T-cell (primary cell): ENCODE measurements at regions of chr15 and their contacts with region 1.

Region 1: GRCh38 chr15:73240866-73241499 is 127.8 kb downstream of the HCN4 start:
- DNase-seq: peak; percentile 20 to 80 (median 58)
- ATAC-seq: peak in 3 of 4 experiments; percentile 37 to 65 (median 61)
- H3K4me3 ChIP-seq: no peak overlapping the region
- H3K4me3 Mint-ChIP-seq: no peak overlapping the region
- H3K27ac ChIP-seq: no peak overlapping the region
- H3K27ac Mint-ChIP-seq: no peak overlapping the region
- H3K4me1 ChIP-seq: no peaks in the 10 kb centered on the region
- H3K4me1 Mint-ChIP-seq: no peaks in the 10 kb centered on the region
- H3K27me3 ChIP-seq: no peaks in the 10 kb centered on the region
- H3K27me3 Mint-ChIP-seq: peaks cover 0 to 3% of the 10 kb centered on the region in 2 donors

Region 2: DNA sequence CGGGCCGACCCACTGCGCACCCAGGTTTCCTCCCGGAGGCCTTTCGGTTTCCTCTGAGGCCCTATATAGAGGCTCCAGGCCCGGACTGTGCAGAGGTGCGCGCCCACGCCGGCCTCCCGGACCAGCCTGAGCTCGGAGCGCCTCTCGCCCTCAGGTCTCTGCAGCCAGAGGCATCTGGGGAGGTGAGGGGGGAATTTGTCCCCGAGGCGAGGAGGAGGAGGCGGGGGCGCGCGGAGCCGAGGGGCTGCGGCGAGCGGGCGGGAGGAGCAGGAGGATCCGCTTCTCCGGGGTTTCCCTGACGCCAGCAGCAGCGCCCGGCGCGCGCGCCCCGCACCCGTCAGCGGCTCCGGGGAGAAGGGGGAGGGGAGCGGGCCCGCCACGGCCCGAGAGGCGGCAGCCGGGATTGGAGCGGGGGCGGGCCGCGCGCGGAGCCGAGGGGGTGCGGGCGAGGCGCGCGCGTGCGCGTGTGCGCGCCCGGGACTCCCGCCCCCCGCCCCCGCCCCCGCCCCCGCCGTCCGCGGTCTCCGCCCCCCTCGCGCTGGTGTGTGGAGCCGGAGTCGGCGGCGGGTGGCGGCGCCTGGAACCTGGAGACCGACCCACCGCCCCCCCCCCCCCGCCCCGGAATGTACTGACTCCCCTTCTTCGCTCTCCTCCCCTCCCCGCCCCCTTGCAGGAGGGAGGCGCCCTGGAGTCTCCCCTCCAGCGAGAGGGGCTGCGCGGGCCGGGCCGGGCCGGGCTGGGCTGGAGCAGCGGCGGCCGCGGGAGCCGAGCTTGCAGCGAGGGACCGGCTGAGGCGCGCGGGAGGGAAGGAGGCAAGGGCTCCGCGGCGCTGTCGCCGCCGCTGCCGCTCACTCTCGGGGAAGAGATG is 188.9 kb before region 1 on chr15 and contains the start of gene NEO1:
- CTCF ChIA-PET with region 1: no interaction called
- POLR2A ChIA-PET with region 1: no interaction called
- DNase-seq: peak; percentile 62 to 89 (median 78)
- ATAC-seq: peak; percentile 78 to 82 (median 80)
- H3K4me3 ChIP-seq: peak within 1 kb of the TSS; percentile 87 to 90
- H3K4me3 Mint-ChIP-seq: peak within 1 kb of the TSS; percentile 82 to 84 (median 82)
- H3K27ac ChIP-seq: peak within 1 kb of the TSS; percentile 63
- H3K27ac Mint-ChIP-seq: peak within 1 kb of the TSS; percentile 67 to 74
- H3K4me1 ChIP-seq: peaks cover 2 to 16% of the 10 kb centered on the region in 2 experiments
- H3K4me1 Mint-ChIP-seq: peaks cover 12 to 13% (median 12%) of the 10 kb centered on the region in 3 donors
- H3K27me3 ChIP-seq: peaks cover 15% of the 10 kb centered on the region in 2 experiments
- H3K27me3 Mint-ChIP-seq: peaks cover 3 to 8% of the 10 kb centered on the region in 2 donors
- total RNA-seq, gene NEO1: 5.0 to 16.6 (median 10.2) TPM

Region 3: DNA sequence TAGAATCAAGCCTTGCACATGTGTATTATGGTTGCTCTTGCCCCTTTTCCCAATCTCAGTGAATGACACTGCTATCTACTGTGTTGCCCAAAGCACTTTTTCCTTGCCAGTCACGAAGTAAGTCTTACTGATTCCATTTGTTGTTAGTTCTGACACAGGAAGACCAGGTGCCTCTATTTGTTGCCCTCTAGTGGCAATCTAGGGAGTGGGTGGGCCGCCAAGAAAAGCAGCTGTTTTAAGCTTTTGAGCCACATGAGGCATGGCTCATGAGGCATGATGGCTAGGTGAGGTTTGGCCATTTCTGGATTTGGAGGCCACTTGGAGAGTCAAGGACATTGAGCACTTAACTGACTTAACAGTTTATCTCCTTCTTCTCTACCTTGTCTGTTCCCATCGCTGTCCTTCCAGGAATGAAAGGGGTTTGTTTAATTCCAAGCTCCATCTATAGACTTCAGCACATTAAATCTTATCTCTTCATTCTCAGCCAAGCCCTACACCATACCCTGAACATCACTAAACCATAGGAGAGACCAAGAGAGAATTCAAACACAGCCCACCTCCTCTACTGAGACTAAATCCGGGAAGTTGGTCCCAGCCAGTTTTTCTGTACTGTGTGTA is 24.7 kb after region 1 on chr15:
- CTCF ChIA-PET with region 1: interaction called in 1 of 2 experiments, 21 read pairs
- POLR2A ChIA-PET with region 1: no interaction called
- DNase-seq: peak; percentile 7 to 59 (median 36)
- ATAC-seq: peak; percentile 55 to 75 (median 65)
- H3K4me3 ChIP-seq: no peak overlapping the region
- H3K4me3 Mint-ChIP-seq: no peak overlapping the region
- H3K27ac ChIP-seq: no peak overlapping the region
- H3K27ac Mint-ChIP-seq: no peak overlapping the region
- H3K4me1 ChIP-seq: no peaks in the 10 kb centered on the region
- H3K4me1 Mint-ChIP-seq: peaks cover 0 to 4% (median 1%) of the 10 kb centered on the region in 3 donors
- H3K27me3 ChIP-seq: no peaks in the 10 kb centered on the region
- H3K27me3 Mint-ChIP-seq: peaks cover 0 to 3% of the 10 kb centered on the region in 2 donors

Region 4: DNA sequence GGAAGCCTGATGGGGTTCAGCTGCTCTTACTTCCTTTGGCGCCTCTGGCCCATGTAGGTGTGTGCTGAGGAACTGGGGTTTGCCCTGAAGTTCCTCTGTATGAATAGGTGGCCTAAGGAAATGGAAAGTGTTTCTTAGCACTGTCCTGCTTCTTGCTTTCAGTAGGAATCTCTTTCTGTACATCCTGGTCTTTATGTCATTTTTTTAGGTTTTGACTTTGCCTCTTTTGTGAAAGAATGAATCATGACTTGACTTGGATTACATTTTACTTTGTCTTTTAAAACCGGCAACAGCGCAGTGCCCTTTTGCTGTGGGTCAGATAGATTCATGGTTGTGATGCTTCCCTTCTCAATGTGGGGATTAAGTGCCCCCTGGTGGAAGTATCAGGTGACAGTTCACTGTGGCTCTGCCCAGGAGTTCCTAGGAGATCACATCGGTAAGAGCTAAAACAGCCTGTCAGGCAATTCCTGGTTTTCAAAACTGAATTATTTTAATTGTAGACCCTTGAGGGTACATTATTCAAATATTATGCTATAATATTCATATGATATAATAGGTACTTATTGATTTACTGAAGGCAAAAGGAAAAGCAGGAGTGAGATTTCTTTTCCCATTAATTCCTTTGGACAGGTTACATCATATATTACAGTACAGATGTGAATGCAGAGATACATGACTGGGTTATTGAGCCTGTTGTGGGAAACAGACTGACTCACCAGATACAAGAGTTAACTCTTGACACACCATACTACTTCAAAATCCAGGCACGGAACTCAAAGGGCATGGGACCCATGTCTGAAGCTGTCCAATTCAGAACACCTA is 32.4 kb after region 1 on chr15:
- CTCF ChIA-PET with region 1: interaction called in 1 of 2 experiments, 11 read pairs
- POLR2A ChIA-PET with region 1: no interaction called
- DNase-seq: peak in 29 of 35 experiments; percentile 3 to 64 (median 19)
- ATAC-seq: peak in 3 of 4 experiments; percentile 39 to 71 (median 52)
- H3K4me3 ChIP-seq: no peak overlapping the region
- H3K4me3 Mint-ChIP-seq: no peak overlapping the region
- H3K27ac ChIP-seq: no peak overlapping the region
- H3K27ac Mint-ChIP-seq: no peak overlapping the region
- H3K4me1 ChIP-seq: no peaks in the 10 kb centered on the region
- H3K4me1 Mint-ChIP-seq: peaks cover 0 to 3% (median 3%) of the 10 kb centered on the region in 3 donors
- H3K27me3 ChIP-seq: peaks cover 0 to 2% of the 10 kb centered on the region in 2 experiments
- H3K27me3 Mint-ChIP-seq: no peaks in the 10 kb centered on the region